ENCODE measurements at regions of chr6 and their contacts with region 1.

Region 1: DNA sequence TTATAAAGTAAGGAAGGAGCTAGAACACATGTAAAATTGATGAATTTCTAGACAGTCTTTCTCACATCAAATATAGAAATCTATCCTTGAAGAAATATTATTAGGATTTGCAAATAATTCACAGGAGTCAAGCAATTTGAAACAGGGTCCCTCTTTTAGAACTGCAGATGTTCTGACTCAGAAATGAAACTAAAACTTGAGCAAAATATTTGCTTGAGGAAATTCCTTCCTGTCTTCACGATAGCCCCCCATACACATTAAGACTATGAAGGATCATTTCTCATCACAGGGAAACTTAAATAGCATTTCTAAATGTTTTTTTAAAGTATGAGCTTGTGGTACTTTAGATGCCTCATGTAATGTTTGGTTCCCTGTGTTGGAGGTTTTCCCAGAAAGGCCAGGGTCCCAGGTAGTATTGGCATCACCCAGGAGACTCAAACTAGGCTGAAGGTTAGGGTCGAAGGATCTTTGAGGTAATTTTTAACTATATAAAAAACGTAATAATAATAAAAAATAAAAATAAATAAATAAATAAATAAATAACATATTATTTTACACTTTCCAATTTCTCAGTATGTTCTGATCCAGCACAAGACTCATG is 144.0 kb upstream of the TBX18 start:
- DNase-seq: no peak
- ATAC-seq: no peak

Region 2: DNA sequence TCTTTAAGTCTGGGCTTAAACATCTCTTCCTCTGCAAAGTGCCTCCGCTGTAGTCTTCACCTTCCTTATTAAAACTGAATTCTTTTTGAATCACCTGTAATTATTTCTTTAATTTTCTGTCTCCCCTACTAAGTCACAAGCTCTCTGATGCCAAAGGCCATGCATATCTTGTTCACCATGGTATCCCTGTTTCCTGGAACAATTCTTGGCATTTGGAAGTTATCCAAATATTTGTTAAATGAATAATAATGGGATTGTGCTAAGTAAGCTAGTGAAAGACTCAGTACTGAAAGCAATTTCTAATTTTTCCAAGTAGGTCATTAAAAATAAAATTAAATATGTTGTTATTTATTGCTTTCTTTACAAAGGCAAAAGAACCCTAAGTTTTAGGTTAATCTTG is 1211.7 kb before region 1 on chr6:
- intact Hi-C with region 1: loop called (anchors 5 kb)
- DNase-seq: no peak
- ATAC-seq: no peak

Measured in sciatic nerve (tissue), 2 donors.